ENCODE measurements at regions of chr1 and their contacts with region 1.

Region 1: GRCh38 chr1:184163674-184164465 is 112.3 kb downstream of the TSEN15 start:
- DNase-seq: peak; percentile 30
- ATAC-seq: no peak
- H3K4me3 Mint-ChIP-seq: no peak overlapping the region
- H3K27ac Mint-ChIP-seq: no peak overlapping the region
- H3K4me1 Mint-ChIP-seq: peaks cover 3% of the 10 kb centered on the region
- H3K27me3 Mint-ChIP-seq: no peaks in the 10 kb centered on the region

Region 2: DNA sequence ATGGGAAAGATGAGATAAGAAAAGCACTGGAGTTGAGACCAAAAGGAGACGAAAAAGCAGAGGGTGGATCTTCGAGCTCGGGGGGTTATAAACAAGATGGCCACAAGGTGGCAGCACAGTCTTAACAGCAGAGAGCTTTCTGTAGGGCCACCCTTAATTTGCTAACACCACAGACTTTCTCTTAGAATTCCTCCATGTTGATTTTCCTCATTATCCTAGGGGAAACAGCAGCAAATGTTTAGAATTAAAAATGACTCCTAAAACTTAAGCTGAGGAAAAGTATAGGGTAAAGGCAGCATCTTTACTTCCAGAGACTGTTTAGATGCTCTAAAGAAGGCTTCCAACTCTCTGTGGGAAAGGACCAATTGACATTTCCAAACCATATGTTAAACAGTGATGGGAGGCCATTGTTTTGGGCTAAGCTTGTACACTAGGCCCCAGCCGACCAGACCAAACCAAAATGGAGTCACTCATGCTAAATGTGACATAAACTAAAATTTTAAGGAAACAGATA is 508.3 kb before region 1 on chr1:
- CTCF ChIA-PET with region 1: no interaction called
- POLR2A ChIA-PET with region 1: no interaction called
- intact Hi-C with region 1: loop called in 1 of 2 experiments (anchors 5 kb)
- DNase-seq: peak; percentile 86
- ATAC-seq: peak; percentile 27
- H3K4me3 Mint-ChIP-seq: no peak overlapping the region
- H3K27ac Mint-ChIP-seq: no peak overlapping the region
- H3K4me1 Mint-ChIP-seq: peaks cover 35% of the 10 kb centered on the region
- H3K27me3 Mint-ChIP-seq: no peaks in the 10 kb centered on the region

Region 3: GRCh38 chr1:183739741-183740271 is 424.1 kb before region 1 on chr1:
- CTCF ChIA-PET with region 1: no interaction called
- POLR2A ChIA-PET with region 1: no interaction called
- intact Hi-C with region 1: no loop called
- DNase-seq: no peak
- ATAC-seq: no peak
- H3K4me3 Mint-ChIP-seq: no peak overlapping the region
- H3K27ac Mint-ChIP-seq: no peak overlapping the region
- H3K4me1 Mint-ChIP-seq: no peaks in the 10 kb centered on the region
- H3K27me3 Mint-ChIP-seq: no peaks in the 10 kb centered on the region

Region 4: DNA sequence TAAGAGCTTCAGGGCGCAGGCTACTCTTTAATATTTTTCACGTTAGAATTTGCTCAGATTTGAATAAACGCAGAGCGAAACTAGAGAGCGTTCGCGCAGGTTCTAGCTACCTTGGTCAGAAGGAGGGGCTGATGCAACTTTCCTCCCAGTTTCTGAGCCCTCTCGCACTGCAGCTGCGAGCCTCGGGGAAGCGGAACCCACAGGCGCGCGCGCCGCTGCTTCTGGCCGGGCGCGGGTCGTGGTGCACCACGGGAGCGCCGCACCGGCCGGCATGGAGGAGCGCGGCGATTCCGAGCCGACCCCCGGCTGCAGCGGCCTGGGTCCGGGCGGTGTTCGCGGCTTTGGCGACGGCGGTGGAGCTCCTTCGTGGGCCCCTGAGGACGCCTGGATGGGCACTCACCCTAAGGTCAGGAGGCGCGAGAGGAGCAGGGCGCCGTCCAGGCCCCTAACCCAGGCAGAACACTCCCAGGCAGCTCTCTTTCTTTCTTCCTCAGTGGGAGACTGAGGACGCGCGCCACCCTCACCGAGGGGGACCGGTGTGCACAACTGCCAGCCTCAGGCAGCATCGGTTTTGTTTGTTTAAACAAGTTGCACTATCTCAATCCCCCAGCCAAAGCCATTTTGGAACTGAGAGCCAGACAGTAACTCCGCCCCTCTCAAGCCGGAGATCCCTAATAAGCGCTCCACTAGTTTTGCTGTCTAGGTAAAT is 112.2 kb before region 1 on chr1 and contains the start of gene TSEN15:
- CTCF ChIA-PET with region 1: no interaction called
- POLR2A ChIA-PET with region 1: no interaction called
- intact Hi-C with region 1: loop called in 1 of 2 experiments (anchors 1 kb)
- DNase-seq: peak; percentile 89
- ATAC-seq: peak; percentile 97
- H3K4me3 Mint-ChIP-seq: peak within 1 kb of the TSS; percentile 93
- H3K27ac Mint-ChIP-seq: peak within 1 kb of the TSS; percentile 99
- H3K4me1 Mint-ChIP-seq: peaks cover 33% of the 10 kb centered on the region
- H3K27me3 Mint-ChIP-seq: peaks cover 9% of the 10 kb centered on the region
- total RNA-seq, gene TSEN15: 44.1 to 47.3 TPM

Region 5: DNA sequence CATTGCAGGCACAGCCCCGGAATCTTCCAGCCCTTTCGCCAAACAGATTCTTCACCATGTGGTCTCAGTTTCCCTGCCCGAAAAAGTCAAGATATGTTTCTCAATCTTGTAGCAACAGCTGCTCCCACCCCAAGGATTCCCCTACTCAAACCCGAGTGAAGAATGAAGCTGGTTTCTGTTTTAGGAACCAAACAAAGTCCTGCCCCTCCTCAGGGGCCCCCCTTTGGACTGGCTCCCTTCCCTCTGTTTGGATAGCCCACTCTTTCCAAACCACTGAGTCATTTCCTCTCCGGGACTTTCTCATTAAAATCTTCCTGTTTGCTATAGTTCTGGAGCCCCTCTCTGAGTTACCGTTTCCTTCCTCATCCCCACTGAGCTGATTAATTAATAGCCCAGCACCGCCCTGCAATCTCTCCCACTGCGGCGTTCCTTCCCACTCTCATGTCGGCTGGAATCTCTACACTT is 11.4 kb before region 1 on chr1:
- CTCF ChIA-PET with region 1: no interaction called
- POLR2A ChIA-PET with region 1: no interaction called
- intact Hi-C with region 1: no loop called
- DNase-seq: no peak
- ATAC-seq: no peak
- H3K4me3 Mint-ChIP-seq: peak overlapping the region; percentile 22
- H3K27ac Mint-ChIP-seq: no peak overlapping the region
- H3K4me1 Mint-ChIP-seq: peaks cover 12% of the 10 kb centered on the region
- H3K27me3 Mint-ChIP-seq: peaks cover 38% of the 10 kb centered on the region

Region 6: GRCh38 chr1:184199438-184200085 is 35.7 kb after region 1 on chr1:
- CTCF ChIA-PET with region 1: no interaction called
- POLR2A ChIA-PET with region 1: no interaction called
- intact Hi-C with region 1: no loop called
- DNase-seq: no peak
- ATAC-seq: no peak
- H3K4me3 Mint-ChIP-seq: no peak overlapping the region
- H3K27ac Mint-ChIP-seq: no peak overlapping the region
- H3K4me1 Mint-ChIP-seq: no peaks in the 10 kb centered on the region
- H3K27me3 Mint-ChIP-seq: peaks cover 10% of the 10 kb centered on the region

Region 7: DNA sequence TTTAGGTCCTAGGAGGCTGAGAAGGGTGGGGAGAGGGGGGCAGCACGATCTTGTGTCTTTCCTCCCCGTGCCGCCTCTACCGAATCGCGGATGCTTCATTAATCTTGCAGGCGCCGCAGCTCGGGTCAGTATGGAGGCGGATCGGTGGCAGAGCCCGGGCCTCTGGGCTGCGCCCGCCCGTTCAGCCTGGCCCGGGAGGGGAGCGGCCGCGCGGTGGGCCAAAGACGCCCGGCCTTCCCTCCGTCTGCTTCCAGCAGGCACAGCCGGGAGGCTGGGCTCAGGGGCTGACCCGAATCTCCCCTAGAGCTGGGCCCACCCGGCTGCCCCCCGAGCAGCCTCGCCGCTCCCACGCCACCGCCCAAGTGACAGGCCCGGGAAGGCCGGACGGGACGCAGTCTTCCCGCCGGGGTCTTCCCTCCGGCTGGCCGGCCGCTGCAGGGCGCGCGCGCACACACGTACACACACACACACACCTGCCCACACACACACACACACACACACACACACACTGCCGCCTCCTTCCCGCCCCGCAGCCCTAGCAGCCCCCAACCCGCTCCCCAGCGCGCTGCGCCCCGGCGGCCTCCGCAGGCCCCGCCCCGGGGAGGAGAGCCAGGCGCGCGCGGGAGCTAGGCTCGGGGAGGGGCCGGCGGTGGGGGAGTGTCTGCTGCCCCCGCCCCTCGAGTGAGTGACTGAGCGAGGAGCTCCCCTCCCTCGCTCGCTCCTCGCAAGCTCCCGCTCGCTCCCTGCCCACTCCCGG is 222.6 kb after region 1 on chr1 and contains the start of gene C1orf21:
- CTCF ChIA-PET with region 1: interaction called, 3 read pairs
- POLR2A ChIA-PET with region 1: no interaction called
- intact Hi-C with region 1: loop called in 1 of 2 experiments (anchors 2 kb)
- DNase-seq: peak; percentile 89
- ATAC-seq: peak; percentile 95
- H3K4me3 Mint-ChIP-seq: peak within 1 kb of the TSS; percentile 66
- H3K27ac Mint-ChIP-seq: peak within 1 kb of the TSS; percentile 38
- H3K4me1 Mint-ChIP-seq: peaks cover 12% of the 10 kb centered on the region
- H3K27me3 Mint-ChIP-seq: peaks cover 44% of the 10 kb centered on the region
- total RNA-seq, gene C1orf21: 2.6 to 6.1 TPM

Region 8: DNA sequence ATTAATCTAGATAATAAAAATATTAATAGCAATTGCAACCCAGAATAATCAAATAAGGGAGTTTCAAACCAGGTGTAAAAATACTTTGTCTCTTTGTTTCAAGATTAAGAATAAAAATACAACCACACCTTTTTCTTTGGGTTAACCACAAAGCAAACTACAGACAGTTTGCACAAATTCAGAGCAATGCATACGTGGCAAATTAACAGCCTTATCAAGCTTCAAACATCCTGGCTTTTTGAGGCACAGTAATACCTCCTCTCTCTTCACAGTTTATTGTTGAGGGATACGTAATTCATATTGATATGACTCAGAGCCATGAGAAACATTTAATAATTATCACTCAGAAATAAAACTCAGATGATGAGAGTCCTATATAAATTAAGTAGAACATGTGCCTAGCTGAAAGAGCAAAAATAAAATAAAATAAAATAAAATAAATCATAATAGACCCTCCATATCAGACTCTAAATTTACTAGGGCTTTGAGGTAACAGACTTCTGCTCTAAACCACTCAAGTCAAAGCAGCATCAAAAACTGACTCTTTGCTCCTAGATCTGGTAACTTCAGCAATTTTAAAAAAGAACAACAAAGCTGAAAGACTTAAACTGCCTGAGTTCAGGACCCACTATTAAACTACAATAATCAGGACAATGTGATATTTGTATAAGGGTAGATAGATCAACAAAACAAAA is 579.3 kb after region 1 on chr1:
- CTCF ChIA-PET with region 1: no interaction called
- POLR2A ChIA-PET with region 1: no interaction called
- intact Hi-C with region 1: loop called in 1 of 2 experiments (anchors 5 kb)
- DNase-seq: no peak
- ATAC-seq: peak; percentile 90
- H3K4me3 Mint-ChIP-seq: no peak overlapping the region
- H3K27ac Mint-ChIP-seq: peak overlapping the region; percentile 88
- H3K4me1 Mint-ChIP-seq: peaks cover 59% of the 10 kb centered on the region
- H3K27me3 Mint-ChIP-seq: no peaks in the 10 kb centered on the region

Region 9: DNA sequence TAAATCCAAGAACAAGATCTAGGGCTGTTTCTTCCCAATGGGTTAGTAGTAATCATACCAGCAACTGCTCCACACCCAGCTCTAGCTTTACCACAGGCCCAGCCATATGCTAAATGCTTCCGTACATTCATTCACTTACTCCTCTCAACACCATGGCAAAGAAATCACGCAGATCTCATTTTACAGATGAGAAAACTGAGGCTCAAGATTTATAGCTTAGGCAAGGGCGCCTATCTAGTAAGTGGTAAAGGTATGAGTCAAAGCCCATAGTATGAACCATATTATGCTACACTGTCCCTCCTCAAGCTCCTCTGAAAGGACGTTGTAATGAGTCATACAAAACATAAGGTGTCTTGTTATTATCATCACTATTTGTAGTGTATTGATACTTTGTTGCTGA is 728.2 kb after region 1 on chr1:
- CTCF ChIA-PET with region 1: no interaction called
- POLR2A ChIA-PET with region 1: no interaction called
- intact Hi-C with region 1: loop called in 1 of 2 experiments (anchors 2 kb)
- DNase-seq: peak; percentile 48
- ATAC-seq: peak; percentile 74
- H3K4me3 Mint-ChIP-seq: no peak overlapping the region
- H3K27ac Mint-ChIP-seq: peak overlapping the region; percentile 67
- H3K4me1 Mint-ChIP-seq: peaks cover 52% of the 10 kb centered on the region
- H3K27me3 Mint-ChIP-seq: no peaks in the 10 kb centered on the region

Region 10: DNA sequence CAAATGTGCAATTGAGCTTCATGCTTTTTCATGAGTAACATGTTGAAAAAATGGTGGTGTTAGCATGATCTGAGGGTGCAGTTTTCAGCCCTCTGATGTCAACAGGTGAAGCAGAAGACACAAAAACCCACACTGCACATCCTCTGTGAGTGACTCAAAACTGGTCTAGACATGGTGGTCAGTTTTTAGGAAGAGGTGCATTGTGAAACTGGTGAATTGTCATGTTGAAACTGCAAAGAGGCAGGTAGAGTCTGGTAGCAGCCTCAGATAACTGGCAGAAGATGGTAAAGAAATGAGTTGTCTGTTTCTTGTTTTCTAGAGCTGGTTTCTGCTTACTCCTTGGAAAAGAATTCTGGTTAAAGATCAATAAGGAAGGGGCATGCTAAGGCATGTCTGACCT is 1473.0 kb after region 1 on chr1:
- CTCF ChIA-PET with region 1: no interaction called
- POLR2A ChIA-PET with region 1: no interaction called
- intact Hi-C with region 1: loop called in 1 of 2 experiments (anchors 10 kb)
- DNase-seq: peak; percentile 63
- ATAC-seq: peak; percentile 95
- H3K4me3 Mint-ChIP-seq: no peak overlapping the region
- H3K27ac Mint-ChIP-seq: peak overlapping the region; percentile 69
- H3K4me1 Mint-ChIP-seq: peaks cover 14% of the 10 kb centered on the region
- H3K27me3 Mint-ChIP-seq: no peaks in the 10 kb centered on the region